CD4-positive, alpha-beta memory T cell (primary cell): ENCODE measurements at regions of chr17 and their contacts with region 1.

Region 1: GRCh38 chr17:49646391-49647255 is 31.3 kb downstream of the SPOP start:
- DNase-seq: no peak
- H3K4me3 ChIP-seq: no peak overlapping the region
- H3K4me3 Mint-ChIP-seq: peak overlapping the region in 4 of 8 donors; percentile 20 to 50 (median 33)
- H3K27ac ChIP-seq: no peak overlapping the region
- H3K27ac Mint-ChIP-seq: peak overlapping the region in 3 of 7 donors; percentile 25 to 60 (median 41)
- H3K4me1 ChIP-seq: peaks cover 31% of the 10 kb centered on the region
- H3K4me1 Mint-ChIP-seq: peaks cover 30 to 60% (median 42%) of the 10 kb centered on the region in 4 donors
- H3K27me3 ChIP-seq: no peaks in the 10 kb centered on the region
- H3K27me3 Mint-ChIP-seq: no peaks in the 10 kb centered on the region

Region 2: GRCh38 chr17:49576088-49576916 is 70.3 kb before region 1 on chr17:
- CTCF ChIA-PET with region 1: no interaction called
- POLR2A ChIA-PET with region 1: no interaction called
- intact Hi-C with region 1: no loop called
- DNase-seq: no peak
- H3K4me3 ChIP-seq: peak overlapping the region in 1 of 2 donors; percentile 27
- H3K4me3 Mint-ChIP-seq: peak overlapping the region; percentile 22 to 77 (median 72)
- H3K27ac ChIP-seq: no peak overlapping the region
- H3K27ac Mint-ChIP-seq: no peak overlapping the region
- H3K4me1 ChIP-seq: peaks cover 17% of the 10 kb centered on the region
- H3K4me1 Mint-ChIP-seq: peaks cover 2 to 15% (median 10%) of the 10 kb centered on the region in 4 donors
- H3K27me3 ChIP-seq: peaks cover 18% of the 10 kb centered on the region
- H3K27me3 Mint-ChIP-seq: peaks cover 16 to 32% of the 10 kb centered on the region in 2 donors

Region 3: GRCh38 chr17:49597928-49598655 is 48.5 kb before region 1 on chr17:
- CTCF ChIA-PET with region 1: no interaction called
- POLR2A ChIA-PET with region 1: no interaction called
- intact Hi-C with region 1: loop called (anchors 10 kb)
- DNase-seq: no peak
- H3K4me3 ChIP-seq: no peak overlapping the region
- H3K4me3 Mint-ChIP-seq: no peak overlapping the region
- H3K27ac ChIP-seq: no peak overlapping the region
- H3K27ac Mint-ChIP-seq: peak overlapping the region in 1 of 7 donors; percentile 63
- H3K4me1 ChIP-seq: no peaks in the 10 kb centered on the region
- H3K4me1 Mint-ChIP-seq: peaks cover 0 to 11% (median 3%) of the 10 kb centered on the region in 4 donors
- H3K27me3 ChIP-seq: no peaks in the 10 kb centered on the region
- H3K27me3 Mint-ChIP-seq: no peaks in the 10 kb centered on the region

Region 4: GRCh38 chr17:49687878-49688491 is 41.4 kb after region 1 on chr17:
- CTCF ChIA-PET with region 1: no interaction called
- POLR2A ChIA-PET with region 1: no interaction called
- intact Hi-C with region 1: no loop called
- DNase-seq: peak in 4 of 5 donors; percentile 29 to 54 (median 42)
- H3K4me3 ChIP-seq: no peak overlapping the region
- H3K4me3 Mint-ChIP-seq: peak overlapping the region; percentile 82 to 94 (median 90)
- H3K27ac ChIP-seq: peak overlapping the region; percentile 64
- H3K27ac Mint-ChIP-seq: peak overlapping the region; percentile 7 to 99 (median 96)
- H3K4me1 ChIP-seq: peaks cover 30% of the 10 kb centered on the region
- H3K4me1 Mint-ChIP-seq: peaks cover 26 to 55% (median 29%) of the 10 kb centered on the region in 4 donors
- H3K27me3 ChIP-seq: no peaks in the 10 kb centered on the region
- H3K27me3 Mint-ChIP-seq: no peaks in the 10 kb centered on the region